ENCODE measurements at regions of chr4 and their contacts with region 1.

Region 1: DNA sequence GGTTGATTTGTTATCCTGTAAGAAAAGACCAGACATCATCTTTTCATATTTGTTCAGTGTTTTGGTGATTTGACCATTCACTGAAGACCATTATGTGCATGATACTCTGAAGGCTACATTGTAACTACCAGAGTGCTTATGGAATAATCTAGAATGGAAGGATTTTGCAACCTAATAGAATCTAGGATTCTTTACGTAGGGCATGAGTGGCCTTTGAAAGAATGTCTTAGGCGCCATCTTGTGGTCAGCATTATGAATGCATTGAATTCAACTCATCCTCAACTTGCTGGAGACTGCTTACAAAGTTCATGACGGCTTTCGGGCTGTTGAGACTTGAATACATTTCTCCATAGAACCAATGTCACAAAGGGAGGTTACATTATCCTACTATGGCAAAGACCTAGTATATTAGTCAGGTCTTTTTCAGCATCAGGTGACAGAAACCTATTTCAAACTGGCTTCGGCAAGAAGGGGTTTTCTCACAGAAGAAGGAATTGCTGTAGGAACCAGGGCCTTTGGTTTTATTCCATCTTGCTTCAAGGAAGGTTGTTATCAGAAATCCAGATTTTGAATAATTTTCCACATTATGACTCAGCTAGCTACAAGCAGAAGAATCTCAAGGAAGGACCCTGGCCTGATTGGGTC is 104.1 kb downstream of the GPAT3 start:
- DNase-seq: no peak
- H3K4me3 ChIP-seq: no peak overlapping the region
- CTCF ChIP-seq: peak; percentile 69

Region 2: GRCh38 chr4:83498187-83498586 is 141.8 kb before region 1 on chr4:
- CTCF ChIA-PET with region 1: interaction called, 21 read pairs
- POLR2A ChIA-PET with region 1: no interaction called
- DNase-seq: no peak
- H3K4me3 ChIP-seq: no peak overlapping the region
- CTCF ChIP-seq: no peak

Region 3: GRCh38 chr4:83516042-83516772 is 123.8 kb before region 1 on chr4:
- CTCF ChIA-PET with region 1: interaction called, 114 read pairs
- POLR2A ChIA-PET with region 1: no interaction called
- DNase-seq: peak; percentile 17
- H3K4me3 ChIP-seq: no peak overlapping the region
- CTCF ChIP-seq: no peak

Region 4: DNA sequence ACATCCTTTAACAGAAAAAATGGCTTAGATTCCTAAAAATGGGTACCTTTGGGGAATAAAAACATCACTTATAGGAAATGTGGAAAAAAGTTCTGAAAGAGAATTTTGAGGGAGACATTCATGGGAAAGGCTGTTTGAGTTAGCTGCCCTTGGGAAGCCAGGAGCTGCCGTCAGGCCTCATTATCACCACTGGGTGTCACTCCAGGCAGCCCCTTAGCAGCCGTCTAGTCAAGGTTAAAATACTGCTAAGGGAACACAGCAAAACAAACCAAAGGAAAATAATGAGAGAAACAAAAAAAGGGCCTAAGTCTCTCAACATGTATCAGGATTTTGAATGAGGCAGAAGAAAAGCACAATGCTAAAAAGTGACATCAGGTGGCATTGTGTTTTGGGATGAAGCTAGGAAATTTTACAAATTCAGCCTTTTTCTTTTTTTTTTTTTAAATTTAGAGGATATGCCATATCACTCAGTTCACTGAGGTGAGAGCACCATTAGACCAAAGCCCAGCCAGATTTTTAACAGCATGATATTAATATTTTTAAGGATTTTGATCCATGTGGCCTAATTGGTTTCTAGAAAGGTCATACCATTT is 131.2 kb after region 1 on chr4:
- CTCF ChIA-PET with region 1: interaction called, 24 read pairs
- POLR2A ChIA-PET with region 1: no interaction called
- DNase-seq: peak; percentile 24
- H3K4me3 ChIP-seq: no peak overlapping the region
- CTCF ChIP-seq: peak; percentile 84

Region 5: DNA sequence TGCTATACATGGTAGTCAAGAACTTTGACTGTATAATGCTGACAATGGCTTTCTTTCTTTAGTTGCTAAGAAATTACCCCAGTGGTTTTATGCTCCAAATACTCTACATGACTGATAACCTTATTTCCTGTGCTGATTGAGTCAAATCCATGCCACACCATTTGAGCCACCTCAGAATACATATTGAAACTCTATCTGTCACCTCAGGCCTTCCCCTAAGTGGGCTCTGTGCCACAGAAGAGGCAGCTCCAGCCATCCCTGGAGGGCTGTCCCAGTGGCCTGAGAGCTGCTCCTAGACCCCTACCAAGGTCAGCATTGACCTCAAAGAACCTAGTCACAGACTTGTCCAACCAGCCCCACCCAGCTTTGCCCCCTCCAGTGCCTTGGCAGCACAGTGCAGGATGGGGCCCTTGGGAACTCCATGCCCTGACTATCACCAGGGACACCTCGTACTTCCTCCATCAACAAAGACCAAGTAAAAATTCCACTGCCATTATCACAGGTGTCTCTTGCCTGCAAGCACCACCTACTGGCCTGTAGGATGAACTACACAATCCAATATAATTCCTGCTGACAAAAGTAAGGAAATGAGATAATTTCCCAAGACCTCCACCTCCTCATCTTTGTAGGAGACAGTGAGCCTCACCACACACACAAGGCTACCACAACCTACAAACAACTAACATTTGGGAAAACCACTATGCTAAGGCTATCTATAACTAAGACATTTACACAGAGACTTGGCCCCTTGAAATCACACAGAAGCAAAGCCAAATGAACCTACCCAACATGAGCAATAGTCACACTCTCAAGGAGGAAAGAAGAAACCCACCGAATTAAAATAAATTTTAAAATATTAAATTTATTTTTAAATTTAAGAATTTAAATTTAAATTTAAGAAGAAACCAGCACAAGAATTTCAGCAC is 619.2 kb after region 1 on chr4:
- CTCF ChIA-PET with region 1: interaction called, 68 read pairs
- POLR2A ChIA-PET with region 1: no interaction called
- DNase-seq: no peak
- H3K4me3 ChIP-seq: no peak overlapping the region
- CTCF ChIP-seq: peak; percentile 59

Region 6: DNA sequence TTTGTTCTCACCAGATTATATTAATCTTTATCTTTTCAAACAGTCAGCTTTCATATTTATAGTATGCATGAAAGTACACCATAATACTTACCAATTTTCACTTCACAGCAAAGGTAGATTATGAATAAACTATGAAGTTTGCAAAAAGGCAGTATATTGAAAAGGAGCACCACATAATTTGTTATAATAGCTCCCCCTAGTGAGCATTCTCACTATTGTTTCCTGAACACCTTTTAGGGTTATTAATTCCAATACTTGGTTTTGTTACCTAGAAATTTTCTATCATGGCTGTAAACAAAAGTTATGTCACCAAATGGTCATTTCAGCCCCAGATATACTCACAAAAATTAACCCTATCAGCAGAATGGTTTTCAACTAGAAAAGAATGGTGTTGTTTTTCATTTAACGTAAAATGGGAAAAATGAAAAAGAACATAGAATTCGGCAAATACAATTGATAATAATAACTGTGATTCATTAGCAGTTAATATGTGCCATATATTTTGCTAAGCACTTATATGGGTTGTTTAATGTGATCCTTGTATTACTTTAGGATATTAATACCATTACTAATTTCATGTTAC is 889.3 kb after region 1 on chr4:
- CTCF ChIA-PET with region 1: interaction called, 12 read pairs
- POLR2A ChIA-PET with region 1: no interaction called
- DNase-seq: no peak
- H3K4me3 ChIP-seq: no peak overlapping the region
- CTCF ChIP-seq: peak; percentile 33